Activated CD4-positive, alpha-beta T cell treated with anti-CD3 and anti-CD28 coated beads, Interleukin-2, amount 10 ng/mL, durations not matched to agents 24 days and 14 days (primary cell): ENCODE measurements at regions of chr1 and their contacts with region 1.

Region 1: GRCh38 chr1:247390116-247390791 is 25.7 kb upstream of the NLRP3 start:
- DNase-seq: peak; percentile 95
- H3K4me3 Mint-ChIP-seq: peak overlapping the region; percentile 62
- H3K27ac Mint-ChIP-seq: peak overlapping the region; percentile 69
- H3K4me1 Mint-ChIP-seq: peaks cover 11% of the 10 kb centered on the region
- H3K27me3 Mint-ChIP-seq: peaks cover 39% of the 10 kb centered on the region

Region 2: DNA sequence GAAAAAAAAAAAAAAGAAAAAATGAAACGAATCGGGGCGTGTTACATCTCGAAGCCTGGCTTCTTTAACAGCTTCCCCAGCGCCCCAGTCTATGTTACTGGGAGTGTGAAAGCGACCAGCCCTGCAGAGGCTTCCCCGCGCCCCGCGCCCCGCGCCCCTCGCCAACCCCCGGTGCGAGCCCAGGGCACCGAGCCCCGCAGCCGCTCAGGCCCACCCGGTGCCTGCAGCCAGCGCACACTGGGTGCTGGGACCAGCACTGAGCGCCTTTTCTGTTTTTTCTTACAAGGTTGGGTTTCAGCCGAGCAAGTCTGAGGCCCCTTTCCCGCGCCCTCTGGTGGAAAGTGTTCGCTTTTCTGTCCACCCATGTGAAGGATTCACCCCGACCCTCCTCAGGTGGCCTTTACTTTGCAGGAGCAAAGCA is 16.5 kb before region 1 on chr1:
- intact Hi-C with region 1: loop called (anchors 2 kb)
- DNase-seq: peak; percentile 85
- H3K4me3 Mint-ChIP-seq: peak overlapping the region; percentile 55
- H3K27ac Mint-ChIP-seq: no peak overlapping the region
- H3K4me1 Mint-ChIP-seq: peaks cover 6% of the 10 kb centered on the region
- H3K27me3 Mint-ChIP-seq: peaks cover 17% of the 10 kb centered on the region

Region 3: DNA sequence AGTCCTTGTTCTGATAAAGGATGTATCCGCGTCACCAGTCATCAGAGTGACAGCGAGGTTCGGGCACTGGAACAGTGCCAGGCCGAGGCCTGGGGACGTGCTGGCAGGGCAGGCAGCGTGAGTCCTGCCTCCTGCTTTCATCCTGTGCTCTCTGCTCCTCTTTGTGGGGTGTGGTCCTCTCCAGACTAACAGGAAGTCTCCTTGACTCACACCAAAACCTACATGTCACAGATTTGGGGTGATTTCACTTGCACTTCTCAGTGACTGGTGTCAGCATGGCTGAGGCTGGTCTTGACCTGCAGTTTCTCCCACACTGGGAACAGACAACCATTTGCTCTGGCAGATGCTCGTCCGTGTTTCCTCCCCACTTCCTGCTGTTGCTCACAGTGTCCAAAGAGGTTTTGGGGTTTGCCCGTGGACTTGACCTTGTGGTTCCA is 16.9 kb after region 1 on chr1:
- intact Hi-C with region 1: loop called (anchors 1 kb)
- DNase-seq: peak; percentile 86
- H3K4me3 Mint-ChIP-seq: peak overlapping the region; percentile 57
- H3K27ac Mint-ChIP-seq: peak overlapping the region; percentile 49
- H3K4me1 Mint-ChIP-seq: peaks cover 31% of the 10 kb centered on the region
- H3K27me3 Mint-ChIP-seq: peaks cover 22% of the 10 kb centered on the region

Region 4: DNA sequence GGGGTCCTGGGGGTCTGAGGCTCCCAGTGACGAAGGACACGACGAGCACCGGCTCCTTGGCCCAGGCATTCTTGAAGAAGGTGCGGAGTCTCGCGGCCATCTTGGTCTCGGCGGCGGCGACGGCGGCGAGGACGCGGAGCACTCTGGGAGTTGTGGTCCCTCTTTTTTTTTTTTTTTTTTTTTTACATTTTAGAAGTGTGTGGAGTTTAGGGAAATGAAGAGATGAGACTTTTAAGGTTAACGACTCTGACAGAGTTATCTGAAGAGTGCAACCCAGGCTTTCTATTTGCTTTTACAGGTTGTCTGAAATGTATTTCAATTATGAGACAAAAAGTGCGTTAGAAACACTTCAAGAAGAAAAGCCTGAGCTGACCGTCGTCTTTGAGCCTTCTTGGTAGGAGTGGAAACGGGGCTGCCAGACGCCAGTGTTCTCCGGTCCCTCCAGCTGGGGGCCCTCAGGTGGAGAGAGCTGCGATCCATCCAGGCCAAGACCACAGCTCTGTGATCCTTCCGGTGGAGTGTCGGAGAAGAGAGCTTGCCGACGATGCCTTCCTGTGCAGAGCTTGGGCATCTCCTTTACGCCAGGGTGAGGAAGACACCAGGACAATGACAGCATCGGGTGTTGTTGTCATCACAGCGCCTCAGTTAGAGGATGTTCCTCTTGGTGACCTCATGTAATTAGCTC is 58.0 kb after region 1 on chr1:
- intact Hi-C with region 1: no loop called
- DNase-seq: no peak
- H3K4me3 Mint-ChIP-seq: no peak overlapping the region
- H3K27ac Mint-ChIP-seq: no peak overlapping the region
- H3K4me1 Mint-ChIP-seq: no peaks in the 10 kb centered on the region
- H3K27me3 Mint-ChIP-seq: no peaks in the 10 kb centered on the region

Region 5: DNA sequence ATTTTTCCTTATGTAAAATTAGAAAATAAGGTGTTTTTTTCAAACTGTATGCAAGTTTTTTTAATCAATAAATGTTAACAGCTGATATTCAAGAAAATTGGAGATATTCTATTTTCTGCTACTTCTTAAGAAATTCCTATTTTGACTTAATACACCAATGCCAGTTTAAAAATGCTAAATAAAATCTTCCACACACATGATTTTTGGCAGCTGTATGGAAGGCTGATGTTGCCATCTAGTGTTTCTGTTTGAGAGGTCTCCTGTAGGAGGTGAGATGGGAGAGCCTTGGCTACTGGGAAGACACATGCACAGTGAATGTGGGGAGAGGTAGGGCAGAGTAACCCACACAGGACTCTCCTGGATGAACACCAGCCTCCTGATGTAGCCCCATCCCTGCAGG is 96.8 kb after region 1 on chr1:
- intact Hi-C with region 1: loop called (anchors 1 kb)
- DNase-seq: peak; percentile 78
- H3K4me3 Mint-ChIP-seq: no peak overlapping the region
- H3K27ac Mint-ChIP-seq: no peak overlapping the region
- H3K4me1 Mint-ChIP-seq: no peaks in the 10 kb centered on the region
- H3K27me3 Mint-ChIP-seq: peaks cover 7% of the 10 kb centered on the region

Region 6: GRCh38 chr1:247576495-247576894 is 186.2 kb after region 1 on chr1:
- intact Hi-C with region 1: loop called (anchors 1 kb)
- DNase-seq: no peak
- H3K4me3 Mint-ChIP-seq: no peak overlapping the region
- H3K27ac Mint-ChIP-seq: no peak overlapping the region
- H3K4me1 Mint-ChIP-seq: no peaks in the 10 kb centered on the region
- H3K27me3 Mint-ChIP-seq: no peaks in the 10 kb centered on the region